ENCODE measurements at regions of chr1 and their contacts with region 1.

Region 1: GRCh38 chr1:46197964-46198811 is at the start of gene POMGNT1:
- DNase-seq: peak; percentile 53 to 90 (median 72)
- ATAC-seq: peak; percentile 92
- H3K4me3 ChIP-seq: peak within 1 kb of the TSS; percentile 81
- H3K4me3 Mint-ChIP-seq: peak within 1 kb of the TSS; percentile 87
- H3K27ac ChIP-seq: peak within 1 kb of the TSS in 1 of 2 donors; percentile 37
- H3K27ac Mint-ChIP-seq: peak within 1 kb of the TSS; percentile 71
- H3K4me1 ChIP-seq: peaks cover 34% of the 10 kb centered on the region
- H3K4me1 Mint-ChIP-seq: peaks cover 36% of the 10 kb centered on the region
- H3K27me3 ChIP-seq: no peaks in the 10 kb centered on the region
- H3K27me3 Mint-ChIP-seq: no peaks in the 10 kb centered on the region
- CTCF ChIP-seq: no peak
- total RNA-seq, gene POMGNT1: 21.1 to 29.0 TPM

Region 2: DNA sequence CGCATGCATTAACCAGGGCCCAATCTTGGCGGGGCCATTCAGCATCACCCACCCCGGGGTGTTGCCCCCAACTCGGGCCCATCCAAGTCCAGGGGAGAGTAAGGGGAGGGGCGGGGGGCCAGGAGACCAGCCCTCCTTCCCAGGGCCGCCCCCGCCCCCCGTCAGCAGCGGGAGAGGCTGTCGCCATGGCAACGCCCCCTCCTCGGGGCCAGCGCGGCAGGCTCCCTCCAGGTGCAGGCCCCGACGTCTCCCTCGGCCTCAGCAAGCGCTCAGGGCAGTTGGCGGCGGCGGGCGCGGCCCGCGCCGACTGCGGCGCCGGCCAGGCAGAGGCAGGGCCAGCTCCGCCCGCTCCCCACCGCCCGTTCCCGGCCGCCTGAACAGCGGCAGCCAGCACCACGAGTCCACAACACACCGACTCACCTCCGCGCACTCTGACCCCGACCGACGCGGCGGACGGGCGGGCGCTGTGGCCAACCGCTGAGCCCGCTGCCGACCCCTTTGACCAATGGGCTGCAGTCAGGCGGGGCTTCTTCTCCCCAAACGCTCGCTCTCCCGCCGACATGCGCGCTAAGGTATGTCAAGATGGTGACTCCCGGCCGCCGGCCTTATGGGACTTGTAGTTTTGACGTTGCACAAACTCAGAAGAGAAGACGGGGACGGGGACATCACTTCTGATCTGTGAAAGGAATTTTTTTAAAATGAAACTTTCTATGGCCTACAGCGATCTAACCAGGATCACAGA is 1843.2 kb before region 1 on chr1 and contains the start of gene ERI3:
- CTCF ChIA-PET with region 1: no interaction called
- POLR2A ChIA-PET with region 1: no interaction called
- intact Hi-C with region 1: loop called in 1 of 2 experiments (anchors 10 kb)
- DNase-seq: peak; percentile 93 to 98 (median 95)
- ATAC-seq: peak; percentile 100
- H3K4me3 ChIP-seq: peak within 1 kb of the TSS; percentile 80
- H3K4me3 Mint-ChIP-seq: peak within 1 kb of the TSS; percentile 94
- H3K27ac ChIP-seq: peak within 1 kb of the TSS in 1 of 2 donors; percentile 29
- H3K27ac Mint-ChIP-seq: peak within 1 kb of the TSS; percentile 63
- H3K4me1 ChIP-seq: peaks cover 19% of the 10 kb centered on the region
- H3K4me1 Mint-ChIP-seq: peaks cover 45% of the 10 kb centered on the region
- H3K27me3 ChIP-seq: no peaks in the 10 kb centered on the region
- H3K27me3 Mint-ChIP-seq: no peaks in the 10 kb centered on the region
- CTCF ChIP-seq: no peak
- total RNA-seq, gene ERI3: 19.7 to 20.7 TPM

Region 3: GRCh38 chr1:46132529-46133180 is 65.5 kb before region 1 on chr1 and contains the start of gene PIK3R3:
- CTCF ChIA-PET with region 1: no interaction called
- POLR2A ChIA-PET with region 1: no interaction called
- intact Hi-C with region 1: loop called in 1 of 2 experiments (anchors 2 kb)
- DNase-seq: peak; percentile 55 to 95 (median 74)
- ATAC-seq: peak; percentile 86
- H3K4me3 ChIP-seq: peak within 1 kb of the TSS; percentile 91
- H3K4me3 Mint-ChIP-seq: peak within 1 kb of the TSS; percentile 93
- H3K27ac ChIP-seq: peak within 1 kb of the TSS in 1 of 2 donors; percentile 78
- H3K27ac Mint-ChIP-seq: peak within 1 kb of the TSS; percentile 10
- H3K4me1 ChIP-seq: peaks cover 23% of the 10 kb centered on the region
- H3K4me1 Mint-ChIP-seq: peaks cover 30% of the 10 kb centered on the region
- H3K27me3 ChIP-seq: peaks cover 22 to 32% of the 10 kb centered on the region in 2 experiments
- H3K27me3 Mint-ChIP-seq: peaks cover 66% of the 10 kb centered on the region
- CTCF ChIP-seq: no peak
- total RNA-seq, gene PIK3R3: 0.20 to 0.38 TPM

Region 4: GRCh38 chr1:46223472-46223943 is 25.3 kb after region 1 on chr1:
- CTCF ChIA-PET with region 1: interaction called, 12 read pairs
- POLR2A ChIA-PET with region 1: interaction called, 4 read pairs
- intact Hi-C with region 1: no loop called
- DNase-seq: peak; percentile 30 to 83 (median 42)
- ATAC-seq: peak; percentile 92
- H3K4me3 ChIP-seq: no peak overlapping the region
- H3K4me3 Mint-ChIP-seq: no peak overlapping the region
- H3K27ac ChIP-seq: no peak overlapping the region
- H3K27ac Mint-ChIP-seq: no peak overlapping the region
- H3K4me1 ChIP-seq: peaks cover 4% of the 10 kb centered on the region
- H3K4me1 Mint-ChIP-seq: no peaks in the 10 kb centered on the region
- H3K27me3 ChIP-seq: no peaks in the 10 kb centered on the region
- H3K27me3 Mint-ChIP-seq: no peaks in the 10 kb centered on the region
- CTCF ChIP-seq: peak; percentile 90

Region 5: DNA sequence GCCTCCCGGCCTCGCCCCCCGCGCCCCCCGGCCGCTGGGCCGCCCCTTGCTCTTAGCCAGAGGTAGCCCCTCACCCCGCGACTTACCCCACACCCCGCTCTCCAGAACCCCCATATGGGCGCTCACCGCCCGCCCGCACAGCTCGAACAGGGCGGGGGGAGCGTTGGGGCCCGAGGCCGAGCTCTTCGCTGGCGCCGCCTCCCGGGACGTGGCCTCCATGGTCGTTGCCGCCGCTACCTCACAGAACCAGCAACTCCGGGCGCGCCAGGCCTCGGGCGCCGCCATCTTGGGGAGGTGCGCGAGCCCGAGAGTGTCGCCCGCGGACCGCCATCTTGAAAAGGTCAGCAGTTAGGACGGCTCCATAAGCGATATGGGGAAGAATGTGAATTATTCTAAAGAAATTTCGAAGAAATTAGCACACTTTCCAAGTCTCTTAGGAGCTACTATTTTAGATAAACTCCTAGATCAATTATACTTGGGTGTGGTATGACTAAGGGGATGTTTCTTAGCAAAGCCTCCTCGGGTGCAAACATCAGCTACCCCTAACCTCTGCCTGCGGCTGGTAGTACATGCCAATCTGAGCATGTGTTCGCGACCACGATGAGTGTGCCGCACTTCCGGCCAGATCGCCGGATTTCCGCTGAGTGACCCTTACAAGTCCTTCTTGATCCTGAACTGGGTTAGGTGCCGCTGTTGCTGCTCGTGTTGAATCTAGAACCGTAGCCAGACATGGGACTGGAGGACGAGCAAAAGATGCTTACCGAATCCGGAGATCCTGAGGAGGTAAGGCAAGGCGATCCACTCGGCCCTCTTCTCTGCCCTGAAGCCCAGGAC is 105.1 kb after region 1 on chr1 and contains the starts of genes LRRC41 and UQCRH:
- CTCF ChIA-PET with region 1: no interaction called
- POLR2A ChIA-PET with region 1: no interaction called
- intact Hi-C with region 1: loop called in 1 of 2 experiments (anchors 5 kb)
- DNase-seq: peak; percentile 89 to 97 (median 92)
- ATAC-seq: peak; percentile 89
- H3K4me3 ChIP-seq: peak within 1 kb of the TSS; percentile 98
- H3K4me3 Mint-ChIP-seq: peak within 1 kb of the TSS; percentile 100
- H3K27ac ChIP-seq: peak within 1 kb of the TSS; percentile 69 to 91
- H3K27ac Mint-ChIP-seq: peak within 1 kb of the TSS; percentile 98
- H3K4me1 ChIP-seq: peaks cover 60% of the 10 kb centered on the region
- H3K4me1 Mint-ChIP-seq: peaks cover 58% of the 10 kb centered on the region
- H3K27me3 ChIP-seq: no peaks in the 10 kb centered on the region
- H3K27me3 Mint-ChIP-seq: no peaks in the 10 kb centered on the region
- CTCF ChIP-seq: no peak
- total RNA-seq, gene LRRC41: 23.0 to 24.3 TPM
- total RNA-seq, gene UQCRH: 101 to 103 TPM

Region 6: DNA sequence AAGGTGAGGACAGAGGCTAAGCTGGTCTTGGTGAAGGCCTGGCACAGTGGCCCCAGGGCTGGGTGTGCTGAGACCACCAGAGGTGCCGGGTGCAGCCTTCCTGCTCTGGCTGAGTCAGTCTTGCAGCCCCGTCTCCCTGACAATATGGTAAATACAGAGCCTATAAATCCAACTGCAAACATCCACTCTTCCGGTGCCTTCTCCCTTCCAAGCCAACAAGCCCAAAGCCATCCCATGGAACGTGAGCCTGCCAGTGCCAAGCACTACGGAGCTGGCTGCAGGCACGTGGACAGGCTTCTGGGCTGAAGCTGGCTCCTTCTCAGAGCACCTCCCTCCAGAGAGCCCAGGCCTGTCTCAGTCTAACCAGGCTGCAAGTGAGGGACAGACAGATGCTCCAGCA is 1729.0 kb after region 1 on chr1:
- CTCF ChIA-PET with region 1: no interaction called
- POLR2A ChIA-PET with region 1: no interaction called
- intact Hi-C with region 1: no loop called
- DNase-seq: no peak
- ATAC-seq: no peak
- H3K4me3 ChIP-seq: no peak overlapping the region
- H3K4me3 Mint-ChIP-seq: no peak overlapping the region
- H3K27ac ChIP-seq: no peak overlapping the region
- H3K27ac Mint-ChIP-seq: no peak overlapping the region
- H3K4me1 ChIP-seq: no peaks in the 10 kb centered on the region
- H3K4me1 Mint-ChIP-seq: no peaks in the 10 kb centered on the region
- H3K27me3 ChIP-seq: peaks cover 6 to 14% of the 10 kb centered on the region in 2 experiments
- H3K27me3 Mint-ChIP-seq: peaks cover 22% of the 10 kb centered on the region
- CTCF ChIP-seq: no peak